ENCODE measurements at regions of chr7 and their contacts with region 1.

Region 1: DNA sequence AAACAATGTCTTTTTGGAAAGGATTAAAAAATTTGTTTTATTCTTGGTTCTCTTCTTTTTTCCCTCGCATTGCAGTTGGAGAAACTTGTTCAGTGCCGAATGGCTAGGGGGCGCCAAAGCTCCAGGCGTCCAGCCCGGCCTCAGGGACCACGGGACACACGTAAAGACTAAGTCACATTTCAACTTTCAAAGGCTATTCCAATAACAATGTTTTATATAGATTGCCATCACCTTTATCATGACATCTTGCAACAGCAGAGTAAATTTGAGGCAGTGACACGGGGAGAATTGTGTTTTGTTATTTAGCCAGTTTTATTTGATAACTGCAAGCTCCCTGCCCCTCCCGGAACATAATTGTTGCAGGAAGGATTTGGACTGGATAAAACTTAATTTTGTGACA is 2.2 kb upstream of the IGFBP3 start:
- DNase-seq: no peak
- ATAC-seq: peak; percentile 75
- H3K4me3 ChIP-seq: no peak overlapping the region
- H3K27ac ChIP-seq: no peak overlapping the region
- H3K4me1 ChIP-seq: no peaks in the 10 kb centered on the region
- H3K27me3 ChIP-seq: peaks cover 1 to 3% of the 10 kb centered on the region in 2 experiments; a peak in 3 of 4 replicates
- CTCF ChIP-seq: peak; percentile 79 to 90 (median 87)
- EP300 ChIP-seq: no peak
- POLR2A ChIP-seq: no peak
- RAD21 ChIP-seq: peak; percentile 94

Region 2: GRCh38 chr7:45863715-45864114 is 59.6 kb before region 1 on chr7:
- CTCF ChIA-PET with region 1: no interaction called
- POLR2A ChIA-PET with region 1: no interaction called
- RAD21 ChIA-PET with region 1: no interaction called
- SMC1A ChIA-PET with region 1: no interaction called
- in situ Hi-C with region 1: no loop called
- intact Hi-C with region 1: no loop called
- DNase-seq: no peak
- ATAC-seq: no peak
- H3K4me3 ChIP-seq: no peak overlapping the region
- H3K27ac ChIP-seq: no peak overlapping the region
- H3K4me1 ChIP-seq: no peaks in the 10 kb centered on the region
- H3K27me3 ChIP-seq: no peaks in the 10 kb centered on the region; a peak in 2 of 4 replicates
- CTCF ChIP-seq: no peak
- EP300 ChIP-seq: no peak
- POLR2A ChIP-seq: no peak
- RAD21 ChIP-seq: no peak

Region 3: DNA sequence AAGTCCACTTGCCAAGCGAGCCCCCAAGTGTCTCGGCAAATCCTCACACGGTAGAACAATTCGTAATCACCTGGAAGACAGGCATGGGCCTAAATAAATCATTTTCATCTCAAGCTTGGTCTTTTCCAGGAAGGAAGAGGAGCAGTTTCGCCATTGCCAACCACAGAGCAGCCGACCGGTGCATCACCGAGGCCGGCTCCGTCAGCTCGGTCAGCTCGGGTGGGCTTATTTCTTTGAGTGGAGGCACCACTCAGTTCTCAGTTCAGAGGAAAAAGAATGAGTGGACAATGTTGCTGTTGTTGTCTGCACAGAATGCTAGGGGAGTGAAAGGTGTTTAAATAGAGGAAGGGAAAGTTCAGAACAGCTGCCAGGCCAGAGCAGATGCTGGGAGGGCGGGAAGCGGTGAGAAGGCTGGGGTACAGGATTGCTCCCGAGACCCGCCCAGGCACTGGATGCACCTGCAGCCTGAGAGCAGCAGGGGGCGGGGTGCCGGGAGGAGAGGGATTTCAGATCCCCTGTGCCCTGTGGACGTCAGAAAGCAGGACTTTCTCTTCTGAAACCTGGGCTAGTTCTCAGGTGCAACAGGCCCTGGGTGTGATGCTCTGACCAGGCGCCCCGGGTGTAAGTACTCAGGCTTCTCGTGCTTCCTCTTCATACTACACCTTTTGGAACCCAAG is 15.5 kb after region 1 on chr7:
- CTCF ChIA-PET with region 1: interaction called, 21 read pairs
- POLR2A ChIA-PET with region 1: no interaction called
- RAD21 ChIA-PET with region 1: interaction called, 6 read pairs
- SMC1A ChIA-PET with region 1: interaction called, 4 read pairs
- in situ Hi-C with region 1: no loop called
- intact Hi-C with region 1: no loop called
- DNase-seq: no peak
- ATAC-seq: no peak; the same call in 2 of the 3 replicates
- H3K4me3 ChIP-seq: no peak overlapping the region
- H3K27ac ChIP-seq: no peak overlapping the region
- H3K4me1 ChIP-seq: no peaks in the 10 kb centered on the region
- H3K27me3 ChIP-seq: no peaks in the 10 kb centered on the region
- CTCF ChIP-seq: peak in 1 of 3 experiments; percentile 21; a peak in 1 of 6 replicates
- EP300 ChIP-seq: no peak
- POLR2A ChIP-seq: no peak
- RAD21 ChIP-seq: no peak

Region 4: GRCh38 chr7:46131916-46132795 is 208.9 kb after region 1 on chr7:
- CTCF ChIA-PET with region 1: interaction called, 10 read pairs
- POLR2A ChIA-PET with region 1: interaction called, 3 read pairs
- RAD21 ChIA-PET with region 1: interaction called, 18 read pairs
- SMC1A ChIA-PET with region 1: interaction called, 3 read pairs
- in situ Hi-C with region 1: no loop called
- intact Hi-C with region 1: loop called (anchors 5 kb)
- DNase-seq: no peak
- ATAC-seq: peak; percentile 84
- H3K4me3 ChIP-seq: no peak overlapping the region
- H3K27ac ChIP-seq: no peak overlapping the region
- H3K4me1 ChIP-seq: no peaks in the 10 kb centered on the region
- H3K27me3 ChIP-seq: no peaks in the 10 kb centered on the region
- CTCF ChIP-seq: no peak
- EP300 ChIP-seq: no peak
- POLR2A ChIP-seq: no peak
- RAD21 ChIP-seq: no peak

Region 5: DNA sequence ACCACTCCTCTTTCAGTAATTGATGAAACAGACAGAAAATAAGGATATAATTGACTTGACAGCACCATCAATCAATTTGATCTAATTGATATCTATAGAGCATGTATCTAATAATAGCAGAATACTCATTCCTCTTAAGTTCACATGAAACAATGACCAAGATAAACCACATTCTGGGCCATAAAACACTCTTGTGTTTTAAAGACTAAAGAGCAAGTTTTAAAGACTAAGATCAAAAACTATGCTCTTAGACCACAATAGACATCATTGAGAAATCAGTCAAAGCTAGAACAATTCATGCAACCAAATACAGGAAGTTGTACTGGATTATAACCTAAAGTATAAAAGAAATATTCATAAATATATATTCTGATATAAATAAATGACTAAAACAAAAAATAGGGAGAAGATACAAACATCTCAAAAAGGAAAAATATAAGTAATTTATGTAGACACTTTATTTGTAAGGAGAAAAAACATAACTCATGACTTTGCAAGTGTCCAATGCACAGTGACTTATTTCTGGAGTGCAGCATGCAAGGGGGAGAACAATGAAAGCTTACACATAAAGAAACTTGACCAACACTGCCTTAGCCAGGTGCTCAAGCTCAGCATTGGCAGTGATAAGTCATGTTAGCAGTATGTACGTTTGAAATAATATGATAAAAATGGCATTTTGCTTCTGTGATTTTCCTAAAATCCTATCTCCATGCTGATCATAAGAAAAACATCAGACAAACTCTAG is 310.5 kb after region 1 on chr7:
- CTCF ChIA-PET with region 1: interaction called, 5 read pairs
- POLR2A ChIA-PET with region 1: no interaction called
- RAD21 ChIA-PET with region 1: interaction called, 3 read pairs
- SMC1A ChIA-PET with region 1: no interaction called
- in situ Hi-C with region 1: no loop called
- intact Hi-C with region 1: loop called (anchors 5 kb)
- DNase-seq: peak; percentile 17
- ATAC-seq: peak; percentile 96
- H3K4me3 ChIP-seq: no peak overlapping the region
- H3K27ac ChIP-seq: no peak overlapping the region
- H3K4me1 ChIP-seq: no peaks in the 10 kb centered on the region
- H3K27me3 ChIP-seq: no peaks in the 10 kb centered on the region
- CTCF ChIP-seq: no peak
- EP300 ChIP-seq: peak; percentile 50 to 60; a peak in 2 of 4 replicates
- POLR2A ChIP-seq: no peak
- RAD21 ChIP-seq: no peak

Region 6: DNA sequence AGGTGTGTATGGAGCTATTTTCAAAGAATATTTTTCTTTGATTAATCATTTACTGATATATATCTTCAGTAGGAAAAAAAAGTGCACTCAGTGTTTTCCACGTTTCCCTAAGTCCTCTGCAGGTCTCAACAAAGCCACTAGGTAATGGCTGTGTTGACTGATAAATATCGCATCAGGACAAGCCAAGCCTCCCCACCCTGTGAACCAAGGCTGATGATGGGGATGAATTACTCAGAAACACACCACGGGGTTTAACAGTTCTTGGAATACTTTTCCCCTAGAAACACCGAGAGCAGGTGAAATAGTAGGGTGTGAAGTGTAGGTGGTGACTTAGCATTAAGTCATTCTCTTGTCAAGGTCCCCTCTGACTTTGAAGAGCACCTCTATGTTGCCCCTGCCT is 421.2 kb after region 1 on chr7:
- CTCF ChIA-PET with region 1: interaction called, 127 read pairs
- POLR2A ChIA-PET with region 1: no interaction called
- RAD21 ChIA-PET with region 1: interaction called, 97 read pairs
- SMC1A ChIA-PET with region 1: interaction called, 130 read pairs
- in situ Hi-C with region 1: no loop called
- intact Hi-C with region 1: no loop called
- DNase-seq: no peak
- ATAC-seq: no peak
- H3K4me3 ChIP-seq: no peak overlapping the region
- H3K27ac ChIP-seq: no peak overlapping the region
- H3K4me1 ChIP-seq: no peaks in the 10 kb centered on the region
- H3K27me3 ChIP-seq: no peaks in the 10 kb centered on the region
- CTCF ChIP-seq: no peak
- EP300 ChIP-seq: no peak
- POLR2A ChIP-seq: no peak
- RAD21 ChIP-seq: no peak

Region 7: DNA sequence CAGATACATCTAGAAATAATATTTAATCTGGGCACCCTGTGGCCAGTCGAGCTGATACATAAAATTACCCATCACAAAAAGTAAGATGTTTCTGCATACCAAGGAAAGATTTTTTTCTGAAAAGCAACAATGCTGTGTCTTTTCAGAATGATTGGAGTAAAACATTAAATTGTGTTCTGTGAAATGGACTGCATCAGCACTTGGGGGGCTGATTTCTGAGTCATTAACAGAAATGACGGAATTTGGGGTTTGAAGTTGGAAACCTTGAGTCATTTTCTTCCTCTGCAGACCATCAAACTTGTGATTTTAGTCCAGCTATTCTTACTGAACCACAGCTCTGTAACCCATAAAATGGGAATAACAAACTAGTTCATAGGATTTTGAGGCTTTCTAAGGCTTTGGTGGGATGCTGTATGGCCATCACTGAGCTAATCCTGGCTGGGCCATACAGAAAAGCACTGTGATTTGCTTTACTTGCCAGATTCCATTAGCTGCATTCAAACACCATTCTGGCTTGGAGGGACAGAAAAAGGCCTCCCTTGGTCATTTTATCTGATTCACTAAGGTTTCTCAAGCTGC is 737.2 kb after region 1 on chr7:
- CTCF ChIA-PET with region 1: interaction called, 4 read pairs
- POLR2A ChIA-PET with region 1: no interaction called
- RAD21 ChIA-PET with region 1: no interaction called
- SMC1A ChIA-PET with region 1: no interaction called
- in situ Hi-C with region 1: no loop called
- intact Hi-C with region 1: loop called (anchors 10 kb)
- DNase-seq: no peak
- ATAC-seq: peak; percentile 28
- H3K4me3 ChIP-seq: no peak overlapping the region
- H3K27ac ChIP-seq: no peak overlapping the region
- H3K4me1 ChIP-seq: no peaks in the 10 kb centered on the region
- H3K27me3 ChIP-seq: no peaks in the 10 kb centered on the region
- CTCF ChIP-seq: no peak
- EP300 ChIP-seq: peak in 1 of 2 experiments; percentile 68; a peak in 1 of 4 replicates
- POLR2A ChIP-seq: no peak
- RAD21 ChIP-seq: no peak

Region 8: GRCh38 chr7:47179812-47180515 is 1256.7 kb after region 1 on chr7:
- CTCF ChIA-PET with region 1: interaction called, 24 read pairs
- POLR2A ChIA-PET with region 1: no interaction called
- RAD21 ChIA-PET with region 1: interaction called, 6 read pairs
- SMC1A ChIA-PET with region 1: interaction called, 5 read pairs
- in situ Hi-C with region 1: loop called (anchors 5 kb)
- intact Hi-C with region 1: no loop called
- DNase-seq: no peak
- ATAC-seq: peak; percentile 87
- H3K4me3 ChIP-seq: no peak overlapping the region
- H3K27ac ChIP-seq: no peak overlapping the region
- H3K4me1 ChIP-seq: no peaks in the 10 kb centered on the region
- H3K27me3 ChIP-seq: no peaks in the 10 kb centered on the region
- CTCF ChIP-seq: peak; percentile 55 to 80 (median 58)
- EP300 ChIP-seq: no peak
- POLR2A ChIP-seq: no peak
- RAD21 ChIP-seq: peak; percentile 71